GM10248 (cell line): ENCODE measurements at regions of chr2 and their contacts with region 1.

Region 1: GRCh38 chr2:207704078-207704477 is 7.4 kb upstream of the CCNYL1 start:
- DNase-seq: no peak
- CTCF ChIP-seq: no peak

Region 2: DNA sequence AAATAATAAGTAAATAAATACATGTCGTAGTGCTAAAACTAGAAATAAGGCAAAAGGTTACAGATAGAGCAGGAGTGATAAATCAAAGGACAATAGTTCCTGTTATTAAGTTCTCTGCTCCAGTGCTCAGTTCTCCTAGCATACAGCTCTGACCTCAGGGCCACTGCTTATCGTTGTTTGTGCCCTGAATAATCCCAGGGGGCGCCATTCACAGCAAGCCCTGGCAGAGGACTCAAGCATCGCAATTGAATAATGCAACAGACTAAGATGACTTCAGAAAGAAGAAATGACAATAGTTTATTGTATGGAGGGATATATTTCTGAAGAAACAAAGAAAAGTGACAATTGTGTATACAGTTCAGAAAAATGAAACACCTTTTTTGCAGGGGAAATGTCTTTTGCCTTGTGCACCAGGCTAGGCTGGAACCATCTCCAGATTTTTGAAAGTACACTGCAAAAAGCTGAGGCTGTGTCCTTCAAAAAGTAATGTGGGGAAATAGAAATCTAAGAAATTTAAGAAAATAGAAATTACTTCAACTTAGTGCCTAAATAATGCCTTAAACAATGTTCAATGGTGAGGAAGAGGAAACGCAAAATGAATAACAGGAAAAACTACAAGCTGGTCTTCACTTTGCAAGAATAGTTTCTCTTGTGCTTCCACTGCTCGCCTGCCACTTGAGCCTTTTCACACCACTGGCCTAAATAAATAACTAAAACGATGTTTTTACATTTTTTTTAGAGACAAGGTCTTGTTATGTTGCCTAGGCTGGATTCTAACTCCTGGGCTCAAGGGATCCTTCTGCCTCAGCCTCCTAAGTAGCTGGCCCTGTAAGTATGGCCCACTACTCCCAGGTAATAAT is 11.6 kb before region 1 on chr2:
- CTCF ChIA-PET with region 1: interaction called, 11 read pairs
- POLR2A ChIA-PET with region 1: no interaction called
- DNase-seq: peak; percentile 46
- CTCF ChIP-seq: no peak